ENCODE measurements at regions of chr12 and their contacts with region 1.

Region 1: GRCh38 chr12:109264095-109264942 is 44.8 kb downstream of the FOXN4 start:
- DNase-seq: peak in 1 of 2 donors; percentile 61
- H3K4me3 ChIP-seq: no peak overlapping the region
- H3K27ac ChIP-seq: no peak overlapping the region
- H3K4me1 ChIP-seq: no peaks in the 10 kb centered on the region
- H3K27me3 ChIP-seq: no peaks in the 10 kb centered on the region
- CTCF ChIP-seq: peak; percentile 45 to 53

Region 2: DNA sequence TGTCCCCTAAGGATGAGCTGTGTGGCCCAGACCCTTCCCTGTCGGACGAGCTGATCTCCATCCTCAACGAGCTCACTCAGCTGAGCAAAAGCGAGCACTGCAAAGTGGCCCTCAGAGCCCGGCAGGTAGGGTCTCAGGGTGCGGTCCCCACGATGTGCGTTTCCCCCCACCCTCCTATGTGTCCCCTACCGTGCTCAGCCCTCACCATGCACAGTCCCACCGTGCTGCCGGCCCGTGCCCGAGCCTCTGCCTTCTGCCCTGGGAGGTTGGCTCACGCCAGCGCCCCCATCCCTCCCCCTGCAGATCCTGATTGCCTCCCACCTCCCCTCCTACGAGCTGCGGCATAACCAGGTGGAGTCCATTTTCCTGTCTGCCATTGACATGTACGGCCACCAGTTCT is 41.8 kb before region 1 on chr12:
- intact Hi-C with region 1: no loop called
- DNase-seq: no peak
- H3K4me3 ChIP-seq: no peak overlapping the region
- H3K27ac ChIP-seq: no peak overlapping the region
- H3K4me1 ChIP-seq: no peaks in the 10 kb centered on the region
- H3K27me3 ChIP-seq: no peaks in the 10 kb centered on the region
- CTCF ChIP-seq: no peak

Region 3: DNA sequence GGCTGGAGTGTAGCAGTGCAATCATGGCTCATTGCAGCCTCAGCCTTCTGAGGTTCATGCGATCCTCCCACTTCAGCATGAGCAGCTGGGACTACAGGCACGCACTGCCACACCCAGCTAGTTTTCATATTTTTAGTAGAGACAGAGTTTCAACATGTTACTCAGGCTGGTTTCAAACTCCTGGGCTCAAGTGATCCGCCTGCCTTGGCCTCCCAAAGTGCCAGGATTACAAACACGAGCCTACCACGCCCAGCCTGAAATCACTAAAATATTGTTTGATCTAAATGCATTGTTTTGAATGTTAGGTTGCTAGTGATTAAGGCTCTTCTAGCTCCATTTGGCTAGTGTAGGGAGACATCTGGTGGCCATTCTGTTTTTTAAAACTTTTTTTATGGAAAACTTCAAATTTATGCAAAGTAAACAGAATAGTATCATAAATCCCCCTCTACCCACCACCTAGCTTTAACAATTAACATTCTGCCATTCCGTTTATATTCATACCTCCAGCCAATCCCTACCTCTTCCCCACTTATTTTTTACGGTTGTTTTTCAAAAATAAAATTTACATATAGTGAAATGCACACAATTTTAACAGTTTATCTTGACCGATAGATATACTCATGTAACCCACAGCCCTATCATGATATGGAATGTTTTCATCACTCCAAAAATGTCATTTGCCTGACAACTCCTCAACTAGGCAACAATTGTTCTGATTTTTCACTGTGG is 121.2 kb after region 1 on chr12:
- intact Hi-C with region 1: loop called (anchors 10 kb)
- DNase-seq: peak in 1 of 2 donors; percentile 47
- H3K4me3 ChIP-seq: no peak overlapping the region
- H3K27ac ChIP-seq: no peak overlapping the region
- H3K4me1 ChIP-seq: no peaks in the 10 kb centered on the region
- H3K27me3 ChIP-seq: peaks cover 0 to 7% of the 10 kb centered on the region in 2 donors
- CTCF ChIP-seq: peak; percentile 9 to 24

Measured in tibial artery (tissue), 4 donors.